Ovary (tissue), 10 donors: ENCODE measurements at regions of chr4 and their contacts with region 1.

Region 1: GRCh38 chr4:121108557-121108956 is 36.2 kb upstream of the NDNF start:
- DNase-seq: no peak
- H3K4me3 ChIP-seq: no peak overlapping the region
- H3K27ac ChIP-seq: no peak overlapping the region
- H3K4me1 ChIP-seq: no peaks in the 10 kb centered on the region
- H3K27me3 ChIP-seq: no peaks in the 10 kb centered on the region
- CTCF ChIP-seq: no peak
- EP300 ChIP-seq: no peak
- POLR2A ChIP-seq: no peak

Region 2: DNA sequence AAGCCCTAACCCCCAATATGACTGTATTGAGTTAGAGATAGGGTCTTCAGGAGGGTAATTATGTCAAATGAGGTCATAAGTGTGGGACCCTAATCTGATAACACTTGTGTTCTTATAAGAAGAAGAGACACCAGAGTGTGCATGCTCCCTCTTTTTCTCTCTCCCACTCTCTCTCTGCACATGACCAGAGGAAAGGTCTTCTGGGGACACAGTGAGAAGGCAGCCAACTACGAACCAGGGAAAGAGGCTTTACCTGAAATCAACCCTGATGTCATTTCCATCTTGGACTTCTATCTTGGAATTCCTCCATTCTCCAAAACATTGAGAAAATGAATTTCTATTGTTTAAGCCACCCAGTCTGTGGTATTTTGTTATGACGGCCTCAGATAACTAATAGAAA is 944.7 kb before region 1 on chr4:
- intact Hi-C with region 1: loop called in 2 of 4 experiments (anchors 10 kb)
- DNase-seq: no peak
- H3K4me3 ChIP-seq: no peak overlapping the region
- H3K27ac ChIP-seq: no peak overlapping the region
- H3K4me1 ChIP-seq: no peaks in the 10 kb centered on the region
- H3K27me3 ChIP-seq: no peaks in the 10 kb centered on the region
- CTCF ChIP-seq: no peak
- EP300 ChIP-seq: no peak
- POLR2A ChIP-seq: no peak